Psoas muscle (tissue), 8 donors: ENCODE measurements at regions of chr5 and their contacts with region 1.

Region 1: DNA sequence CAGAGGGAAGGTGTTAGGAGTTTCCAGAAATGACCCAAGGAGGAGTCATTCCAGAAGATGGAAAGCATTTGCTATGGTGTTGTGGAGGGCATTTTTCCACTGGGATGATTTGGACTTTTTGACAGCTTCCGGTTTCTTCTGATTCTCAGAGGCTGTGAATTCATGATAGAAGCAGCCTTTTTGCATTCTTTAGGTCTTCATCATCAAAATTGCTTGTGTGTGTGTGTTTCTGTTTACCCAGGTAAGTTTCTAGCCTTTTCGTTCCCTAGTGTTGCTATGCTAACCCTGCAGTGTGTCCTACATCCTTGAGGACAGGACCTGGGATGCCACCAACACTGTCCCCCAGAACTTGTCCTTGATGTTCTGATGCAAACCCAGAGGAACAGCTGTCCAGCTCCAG is 19.6 kb downstream of the IRX1 start:
- DNase-seq: no peak
- ATAC-seq: no peak
- H3K4me3 ChIP-seq: no peak overlapping the region
- H3K27ac ChIP-seq: no peak overlapping the region
- H3K4me1 ChIP-seq: no peaks in the 10 kb centered on the region
- H3K27me3 ChIP-seq: peaks cover 0 to 6% (median 4%) of the 10 kb centered on the region in 3 donors
- CTCF ChIP-seq: no peak

Region 2: GRCh38 chr5:3597167-3598007 is 17.8 kb before region 1 on chr5:
- intact Hi-C with region 1: loop called in 1 of 2 experiments (anchors 1 kb)
- DNase-seq: no peak
- ATAC-seq: no peak
- H3K4me3 ChIP-seq: no peak overlapping the region
- H3K27ac ChIP-seq: no peak overlapping the region
- H3K4me1 ChIP-seq: no peaks in the 10 kb centered on the region
- H3K27me3 ChIP-seq: peaks cover 5 to 97% (median 61%) of the 10 kb centered on the region in 3 donors
- CTCF ChIP-seq: no peak

Region 3: DNA sequence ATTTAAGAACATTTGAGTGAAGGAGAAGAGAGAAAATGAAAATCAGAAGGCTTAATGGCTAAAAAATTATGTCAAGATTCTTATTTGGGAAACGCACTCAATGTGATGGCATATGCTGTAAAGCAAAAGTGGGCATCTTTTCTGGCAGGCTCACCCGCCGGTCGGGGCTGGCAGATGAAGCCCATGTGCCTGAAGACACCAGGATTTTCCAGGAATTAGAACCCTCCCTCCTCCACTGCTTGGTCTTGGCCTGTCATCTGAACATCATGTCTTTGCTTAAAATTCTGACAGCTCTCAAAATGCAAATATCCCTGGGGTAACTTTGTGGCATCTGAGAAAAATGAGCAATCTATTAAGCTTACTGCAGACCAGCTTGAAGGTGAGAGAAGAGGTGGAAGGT is 318.3 kb after region 1 on chr5:
- intact Hi-C with region 1: no loop called
- DNase-seq: no peak
- ATAC-seq: no peak
- H3K4me3 ChIP-seq: no peak overlapping the region
- H3K27ac ChIP-seq: no peak overlapping the region
- H3K4me1 ChIP-seq: no peaks in the 10 kb centered on the region
- H3K27me3 ChIP-seq: no peaks in the 10 kb centered on the region
- CTCF ChIP-seq: no peak